Activated B cell treated with CpG ODN at 0.5 μM for 24 hours (primary cell): ENCODE measurements at regions of chrX and their contacts with region 1.

Region 1: GRCh38 chrX:41705680-41706374 is 17.1 kb downstream of the GPR34 start:
- DNase-seq: no peak
- ATAC-seq: peak; percentile 81
- H3K4me3 Mint-ChIP-seq: peak overlapping the region; percentile 72
- H3K27ac Mint-ChIP-seq: peak overlapping the region; percentile 89
- H3K4me1 Mint-ChIP-seq: peaks cover 58% of the 10 kb centered on the region
- H3K27me3 Mint-ChIP-seq: no peaks in the 10 kb centered on the region
- CTCF ChIP-seq: no peak

Region 2: GRCh38 chrX:41688835-41689234 is 17.0 kb before region 1 on chrX and contains the start of gene GPR34:
- CTCF ChIA-PET with region 1: no interaction called
- POLR2A ChIA-PET with region 1: interaction called, 4 read pairs
- intact Hi-C with region 1: loop called (anchors 2 kb)
- DNase-seq: no peak
- ATAC-seq: no peak
- H3K4me3 Mint-ChIP-seq: no peak within 1 kb of the TSS
- H3K27ac Mint-ChIP-seq: no peak within 1 kb of the TSS
- H3K4me1 Mint-ChIP-seq: peaks cover 53% of the 10 kb centered on the region
- H3K27me3 Mint-ChIP-seq: no peaks in the 10 kb centered on the region
- CTCF ChIP-seq: no peak
- total RNA-seq, gene GPR34: 0.24 and 0.42 TPM in 2 replicates

Region 3: GRCh38 chrX:41720125-41720779 is 14.4 kb after region 1 on chrX:
- CTCF ChIA-PET with region 1: interaction called, 5 read pairs
- POLR2A ChIA-PET with region 1: interaction called, 14 read pairs
- intact Hi-C with region 1: loop called (anchors 2 kb)
- DNase-seq: peak; percentile 16
- ATAC-seq: peak; percentile 91
- H3K4me3 Mint-ChIP-seq: no peak overlapping the region
- H3K27ac Mint-ChIP-seq: no peak overlapping the region
- H3K4me1 Mint-ChIP-seq: peaks cover 71% of the 10 kb centered on the region
- H3K27me3 Mint-ChIP-seq: no peaks in the 10 kb centered on the region
- CTCF ChIP-seq: no peak

Region 4: DNA sequence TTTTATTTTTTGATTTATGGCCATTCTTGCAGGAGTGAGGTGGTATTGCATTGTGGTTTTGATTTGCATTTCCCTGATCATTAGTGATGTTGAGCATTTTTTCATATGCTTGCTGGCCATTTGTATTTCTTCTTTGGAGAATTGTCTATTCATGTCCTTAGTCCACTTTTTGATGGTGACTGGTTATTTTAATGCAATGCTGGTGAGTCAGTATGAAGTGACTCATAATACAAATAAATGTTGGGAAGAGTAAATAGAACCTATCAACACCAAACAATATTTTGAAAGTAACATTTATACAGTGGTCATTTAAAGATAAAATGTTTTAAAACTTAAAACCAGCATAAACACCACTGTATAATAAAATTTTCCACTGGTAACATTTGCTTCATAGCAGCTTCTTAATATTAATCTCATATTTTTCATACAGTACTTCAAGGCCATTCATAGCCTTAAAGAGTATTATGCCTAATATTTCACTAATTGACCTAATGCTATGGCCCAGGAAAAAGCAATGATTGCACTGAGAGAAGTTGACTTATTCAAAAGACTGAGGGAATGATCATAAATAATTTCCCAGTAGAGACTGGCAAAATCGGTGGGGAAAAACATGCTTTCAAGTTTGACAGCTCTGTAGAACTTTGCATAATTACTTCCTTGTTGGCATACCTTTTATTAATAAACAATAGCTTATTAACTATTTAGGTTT is 183.6 kb after region 1 on chrX:
- CTCF ChIA-PET with region 1: no interaction called
- POLR2A ChIA-PET with region 1: no interaction called
- intact Hi-C with region 1: no loop called
- DNase-seq: no peak
- ATAC-seq: no peak
- H3K4me3 Mint-ChIP-seq: no peak overlapping the region
- H3K27ac Mint-ChIP-seq: no peak overlapping the region
- H3K4me1 Mint-ChIP-seq: peaks cover 5% of the 10 kb centered on the region
- H3K27me3 Mint-ChIP-seq: no peaks in the 10 kb centered on the region
- CTCF ChIP-seq: no peak